OCI-LY7 (cell line): ENCODE measurements at regions of chr15 and their contacts with region 1.

Region 1: DNA sequence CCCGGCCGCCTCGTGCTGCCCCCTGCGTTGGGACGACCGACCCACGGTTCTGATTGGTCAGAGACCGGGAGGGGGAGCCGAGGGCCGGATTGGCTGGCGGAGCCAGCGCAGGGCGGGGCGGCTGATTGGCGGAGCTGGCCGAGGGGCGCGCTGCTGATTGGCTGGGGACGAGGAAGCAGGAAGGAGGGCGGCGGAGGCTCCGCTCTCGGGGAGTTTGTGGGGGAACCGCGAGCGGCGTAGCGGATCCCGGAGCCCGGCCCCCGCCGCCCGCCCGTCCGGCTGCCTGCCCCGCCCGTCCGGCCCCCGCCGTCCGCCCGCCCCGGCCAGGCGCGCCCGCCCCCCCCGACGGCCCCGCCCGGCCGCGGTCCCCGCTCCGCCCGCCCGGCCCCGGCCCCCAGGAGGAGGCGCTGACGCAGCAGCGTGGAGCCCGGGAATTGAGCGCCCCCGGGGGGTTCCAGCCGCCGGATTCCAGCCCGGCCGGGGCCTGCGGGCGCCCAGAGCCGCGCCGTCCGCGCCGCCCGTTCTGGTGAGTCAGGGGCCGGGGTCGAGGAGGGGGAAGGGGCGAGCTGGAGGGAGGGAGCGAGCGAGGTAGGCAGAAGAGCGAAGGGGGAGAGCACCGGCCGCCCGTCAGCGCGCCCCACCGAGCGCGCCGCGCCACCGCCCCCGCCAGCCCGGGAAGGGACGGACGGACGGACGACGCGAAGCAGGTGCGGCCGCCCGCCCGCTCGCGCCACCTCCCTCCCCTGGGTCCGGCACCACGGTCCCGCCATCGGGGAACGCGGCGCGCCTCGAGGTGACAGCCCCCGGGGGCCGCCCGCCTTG is at the start of gene BAHD1:
- DNase-seq: peak; percentile 96
- H3K4me3 ChIP-seq: peak within 1 kb of the TSS; percentile 93
- H3K27ac ChIP-seq: peak within 1 kb of the TSS; percentile 31
- H3K4me1 ChIP-seq: peaks cover 21% of the 10 kb centered on the region
- CTCF ChIP-seq: 0 out of 2 replicates have a peak, but pooled peaks have one; percentile 3
- total RNA-seq, gene BAHD1: 14.6 and 15.0 TPM in 2 replicates

Region 2: DNA sequence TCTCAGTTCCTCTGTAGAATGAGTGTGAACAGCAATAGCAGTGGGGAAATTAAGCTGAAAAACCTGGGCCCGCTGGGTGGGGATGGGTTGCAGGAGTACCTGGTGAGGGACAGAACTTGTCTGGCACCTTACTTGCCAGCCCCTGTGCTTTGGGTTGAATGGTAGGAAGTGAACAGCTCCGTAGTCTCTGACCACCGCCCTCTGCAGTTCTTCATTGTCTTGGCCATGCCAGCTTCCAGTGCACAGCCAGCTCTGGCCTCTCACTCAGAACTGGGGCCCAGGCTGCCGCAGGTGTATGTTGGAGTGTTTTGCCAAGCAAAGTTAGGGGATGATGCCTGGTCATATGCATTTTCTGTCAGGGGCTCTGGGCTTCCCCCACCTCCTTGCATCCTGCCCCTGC is 15.8 kb after region 1 on chr15:
- CTCF ChIA-PET with region 1: interaction called, 4 read pairs
- POLR2A ChIA-PET with region 1: interaction called, 4 read pairs
- intact Hi-C with region 1: loop called (anchors 1 kb)
- DNase-seq: no peak
- H3K4me3 ChIP-seq: no peak overlapping the region
- H3K27ac ChIP-seq: no peak overlapping the region
- H3K4me1 ChIP-seq: peaks cover 7% of the 10 kb centered on the region
- CTCF ChIP-seq: no peak

Region 3: DNA sequence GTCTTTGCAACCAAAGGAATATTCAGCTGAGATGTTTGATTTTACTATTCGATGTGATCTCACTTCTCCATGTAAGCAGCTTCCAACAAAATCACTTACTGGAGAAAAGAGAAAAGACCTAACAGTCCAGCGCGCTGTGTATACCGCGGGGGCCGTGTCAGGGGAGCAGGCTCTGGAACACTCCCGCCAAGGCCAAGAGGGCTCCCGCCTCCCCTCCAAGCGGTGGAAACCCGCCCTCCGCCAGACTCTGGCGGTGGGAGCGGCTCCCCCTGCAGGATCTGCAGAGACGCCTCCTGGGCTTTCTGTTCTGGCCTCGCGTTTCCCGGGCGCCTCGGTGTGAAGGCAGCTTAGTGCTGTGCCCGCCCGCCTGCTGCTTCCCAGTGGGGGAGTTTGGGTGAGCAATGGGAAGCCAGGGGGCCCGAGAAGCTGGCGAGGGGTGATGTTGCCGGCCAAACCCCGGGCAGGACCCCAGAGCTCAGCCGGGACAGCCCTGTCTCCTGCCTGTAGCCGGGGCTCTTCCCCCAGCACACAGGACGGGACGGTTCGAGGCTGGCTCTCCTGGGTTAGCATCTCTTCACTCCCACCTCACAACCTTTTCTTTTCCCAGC is 66.1 kb after region 1 on chr15:
- CTCF ChIA-PET with region 1: no interaction called
- POLR2A ChIA-PET with region 1: no interaction called
- intact Hi-C with region 1: no loop called
- DNase-seq: peak; percentile 46
- H3K4me3 ChIP-seq: no peak overlapping the region
- H3K27ac ChIP-seq: no peak overlapping the region
- H3K4me1 ChIP-seq: no peaks in the 10 kb centered on the region
- CTCF ChIP-seq: peak; percentile 65